ENCODE measurements at regions of chr1 and their contacts with region 1.

Region 1: DNA sequence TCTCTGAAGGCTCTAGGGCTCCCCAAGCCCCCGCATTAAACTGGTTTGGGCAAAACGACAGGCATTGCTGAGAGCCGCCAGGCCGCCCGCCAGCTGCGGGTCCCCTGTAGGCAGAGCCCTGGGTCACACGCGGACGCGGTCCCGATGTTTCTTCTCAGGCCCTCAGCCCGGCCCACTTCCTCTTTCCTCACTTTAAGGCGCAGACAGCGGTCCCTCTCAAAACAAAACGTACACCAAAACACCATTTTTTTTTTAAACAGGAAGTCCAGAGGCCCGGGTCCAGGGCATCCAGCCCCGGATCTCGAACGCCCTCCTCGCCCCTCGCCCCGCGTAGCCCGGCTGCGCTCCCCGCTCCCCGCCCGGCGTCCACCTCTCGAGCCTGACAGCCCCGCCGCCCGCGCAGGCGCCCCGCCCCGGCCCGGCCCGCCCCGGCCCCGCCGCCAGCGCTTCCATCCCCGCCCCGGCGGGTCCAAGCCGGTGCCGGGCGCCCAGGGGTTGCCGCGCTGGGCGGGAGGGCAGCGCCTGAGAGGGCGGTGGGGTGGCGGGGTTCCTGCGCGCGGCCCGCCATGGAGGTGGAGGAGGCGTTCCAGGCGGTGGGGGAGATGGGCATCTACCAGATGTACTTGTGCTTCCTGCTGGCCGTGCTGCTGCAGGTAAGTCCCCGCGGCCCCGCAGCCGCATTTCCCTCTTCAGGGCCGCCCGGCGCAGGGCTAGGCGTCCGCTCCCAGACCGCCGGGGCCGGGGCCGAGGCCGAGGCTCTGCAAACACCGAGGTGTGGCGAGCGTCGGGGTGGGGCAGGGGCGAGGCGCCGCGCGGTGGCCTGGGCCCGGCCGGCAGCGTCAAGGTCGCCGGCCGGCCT is at the start of gene SLC22A15:
- DNase-seq: peak; percentile 58 to 77 (median 72)
- ATAC-seq: peak; percentile 75
- H3K4me3 ChIP-seq: peak within 1 kb of the TSS; percentile 71 to 81
- H3K27ac ChIP-seq: peak within 1 kb of the TSS; percentile 65 to 85 (median 78)
- H3K4me1 ChIP-seq: peaks cover 16% of the 10 kb centered on the region
- H3K27me3 ChIP-seq: no peaks in the 10 kb centered on the region
- CTCF ChIP-seq: no peak
- POLR2A ChIP-seq: peak in 1 of 3 donors; percentile 40
- total RNA-seq, gene SLC22A15: 7.9 to 8.8 TPM

Region 2: GRCh38 chr1:115807723-115808122 is 168.6 kb before region 1 on chr1:
- intact Hi-C with region 1: loop called (anchors 5 kb)
- DNase-seq: peak; percentile 71 to 83 (median 74)
- ATAC-seq: peak; percentile 57
- H3K4me3 ChIP-seq: no peak overlapping the region
- H3K27ac ChIP-seq: no peak overlapping the region
- H3K4me1 ChIP-seq: peaks cover 23% of the 10 kb centered on the region
- H3K27me3 ChIP-seq: no peaks in the 10 kb centered on the region
- CTCF ChIP-seq: peak; percentile 41 to 79 (median 65)
- POLR2A ChIP-seq: no peak

Measured in body of pancreas (tissue), 4 donors.